Gastrocnemius medialis (tissue), 4 donors: ENCODE measurements at regions of chr12 and their contacts with region 1.

Region 1: GRCh38 chr12:57019983-57020719 is 3.8 kb upstream of the TAC3 start:
- DNase-seq: no peak
- ATAC-seq: no peak
- H3K4me3 ChIP-seq: no peak overlapping the region
- H3K27ac ChIP-seq: no peak overlapping the region
- H3K4me1 ChIP-seq: no peaks in the 10 kb centered on the region
- H3K27me3 ChIP-seq: peaks cover 0 to 6% (median under 1%) of the 10 kb centered on the region in 3 donors
- CTCF ChIP-seq: no peak
- POLR2A ChIP-seq: no peak

Region 2: GRCh38 chr12:56941299-56942017 is 78.7 kb before region 1 on chr12:
- in situ Hi-C with region 1: no loop called
- intact Hi-C with region 1: loop called (anchors 5 kb)
- DNase-seq: no peak
- ATAC-seq: peak; percentile 61 to 75
- H3K4me3 ChIP-seq: no peak overlapping the region
- H3K27ac ChIP-seq: no peak overlapping the region
- H3K4me1 ChIP-seq: peaks cover 0 to 10% of the 10 kb centered on the region in 2 donors
- H3K27me3 ChIP-seq: no peaks in the 10 kb centered on the region
- CTCF ChIP-seq: no peak
- POLR2A ChIP-seq: no peak